ENCODE measurements at regions of chr5 and their contacts with region 1.

Region 1: GRCh38 chr5:35783551-35783950 is 73.1 kb upstream of the IL7R start:
- DNase-seq: no peak
- H3K4me3 ChIP-seq: no peak overlapping the region
- H3K27ac ChIP-seq: no peak overlapping the region
- H3K4me1 ChIP-seq: peaks cover 10% of the 10 kb centered on the region
- H3K27me3 ChIP-seq: no peaks in the 10 kb centered on the region
- CTCF ChIP-seq: no peak
- POLR2A ChIP-seq: no peak

Region 2: DNA sequence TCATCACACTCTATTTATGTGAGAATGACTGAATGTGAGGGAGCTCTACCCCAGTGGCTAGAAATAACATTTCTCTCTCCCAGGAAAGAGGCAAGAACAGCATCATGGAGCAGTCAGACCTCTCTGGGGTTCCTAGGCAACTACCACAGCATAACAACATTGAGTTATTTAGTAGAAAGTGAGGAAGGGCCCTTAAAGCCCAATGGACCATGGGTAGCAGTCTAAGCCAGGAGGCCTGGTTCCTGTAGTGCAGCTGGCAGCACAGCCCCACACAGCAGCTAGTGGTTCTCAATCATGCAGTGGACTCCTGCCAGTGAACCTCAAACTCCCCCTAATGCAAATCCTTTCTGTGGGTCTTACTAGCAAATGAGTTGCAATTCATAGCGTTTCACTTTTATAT is 110.6 kb before region 1 on chr5:
- CTCF ChIA-PET with region 1: no interaction called
- POLR2A ChIA-PET with region 1: no interaction called
- dilution Hi-C with region 1: no loop called
- intact Hi-C with region 1: no loop called
- DNase-seq: no peak
- H3K4me3 ChIP-seq: no peak overlapping the region
- H3K27ac ChIP-seq: no peak overlapping the region
- H3K4me1 ChIP-seq: no peaks in the 10 kb centered on the region
- H3K27me3 ChIP-seq: no peaks in the 10 kb centered on the region
- CTCF ChIP-seq: no peak
- POLR2A ChIP-seq: no peak

Region 3: GRCh38 chr5:35852084-35852734 is 68.7 kb after region 1 on chr5:
- CTCF ChIA-PET with region 1: interaction called, 16 read pairs
- POLR2A ChIA-PET with region 1: no interaction called
- dilution Hi-C with region 1: no loop called
- intact Hi-C with region 1: loop called (anchors 2 kb)
- DNase-seq: no peak
- H3K4me3 ChIP-seq: no peak overlapping the region
- H3K27ac ChIP-seq: no peak overlapping the region
- H3K4me1 ChIP-seq: peaks cover 10% of the 10 kb centered on the region
- H3K27me3 ChIP-seq: no peaks in the 10 kb centered on the region
- CTCF ChIP-seq: no peak
- POLR2A ChIP-seq: no peak